ENCODE measurements at regions of chr9 and their contacts with region 1.

Region 1: GRCh38 chr9:91193658-91194391 is 167.9 kb downstream of the AUH start:
- DNase-seq: peak; percentile 92
- ATAC-seq: peak; percentile 54
- H3K4me3 Mint-ChIP-seq: peak overlapping the region; percentile 67
- H3K27ac Mint-ChIP-seq: peak overlapping the region; percentile 91
- H3K4me1 Mint-ChIP-seq: peaks cover 70% of the 10 kb centered on the region
- H3K27me3 Mint-ChIP-seq: no peaks in the 10 kb centered on the region
- CTCF ChIP-seq: no peak

Region 2: GRCh38 chr9:91101611-91102168 is 92.1 kb before region 1 on chr9:
- CTCF ChIA-PET with region 1: interaction called, 6 read pairs
- POLR2A ChIA-PET with region 1: interaction called, 3 read pairs
- intact Hi-C with region 1: loop called (anchors 1 kb)
- DNase-seq: peak; percentile 97
- ATAC-seq: peak; percentile 82
- H3K4me3 Mint-ChIP-seq: peak overlapping the region; percentile 79
- H3K27ac Mint-ChIP-seq: peak overlapping the region; percentile 95
- H3K4me1 Mint-ChIP-seq: peaks cover 58% of the 10 kb centered on the region
- H3K27me3 Mint-ChIP-seq: peaks cover 3% of the 10 kb centered on the region
- CTCF ChIP-seq: no peak

Region 3: GRCh38 chr9:91150998-91151717 is 42.7 kb before region 1 on chr9:
- CTCF ChIA-PET with region 1: interaction called, 12 read pairs
- POLR2A ChIA-PET with region 1: interaction called, 69 read pairs
- intact Hi-C with region 1: loop called (anchors 1 kb)
- DNase-seq: peak; percentile 72
- ATAC-seq: peak; percentile 68
- H3K4me3 Mint-ChIP-seq: peak overlapping the region; percentile 0
- H3K27ac Mint-ChIP-seq: peak overlapping the region; percentile 94
- H3K4me1 Mint-ChIP-seq: peaks cover 85% of the 10 kb centered on the region
- H3K27me3 Mint-ChIP-seq: no peaks in the 10 kb centered on the region
- CTCF ChIP-seq: no peak

Region 4: DNA sequence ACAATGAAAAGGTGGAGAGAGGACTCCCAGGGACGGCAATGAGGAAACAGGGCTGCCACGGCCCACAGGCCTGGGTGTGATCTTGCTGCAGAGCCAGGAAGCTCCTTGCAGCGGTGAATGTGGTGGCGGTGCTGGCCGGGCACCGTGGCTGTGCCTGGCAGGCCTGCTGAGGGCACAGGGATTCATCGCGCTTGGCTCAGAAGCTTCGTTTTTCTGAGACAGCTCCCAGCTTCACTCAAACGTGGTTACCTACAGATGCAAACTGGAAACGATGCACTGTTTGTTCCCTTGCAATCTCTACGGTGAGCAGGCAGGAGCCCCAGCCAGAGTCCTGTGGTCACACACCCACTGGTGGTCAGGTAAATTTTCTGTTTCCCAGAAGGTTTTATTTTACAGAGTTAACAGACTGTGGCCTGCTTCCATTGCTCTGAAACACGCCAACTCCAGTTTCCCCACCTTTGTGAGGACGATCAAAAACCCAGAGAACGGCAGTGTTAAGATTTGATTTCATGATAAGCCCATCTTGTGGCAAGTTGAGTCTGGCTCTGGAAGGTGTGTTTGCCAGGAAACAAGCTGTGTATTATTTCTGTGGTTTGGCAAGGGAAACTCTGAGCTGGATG is 16.1 kb before region 1 on chr9:
- CTCF ChIA-PET with region 1: interaction called, 10 read pairs
- POLR2A ChIA-PET with region 1: interaction called, 32 read pairs
- intact Hi-C with region 1: no loop called
- DNase-seq: peak; percentile 77
- ATAC-seq: peak; percentile 66
- H3K4me3 Mint-ChIP-seq: peak overlapping the region; percentile 51
- H3K27ac Mint-ChIP-seq: peak overlapping the region; percentile 95
- H3K4me1 Mint-ChIP-seq: peaks cover 58% of the 10 kb centered on the region
- H3K27me3 Mint-ChIP-seq: no peaks in the 10 kb centered on the region
- CTCF ChIP-seq: no peak

Region 5: DNA sequence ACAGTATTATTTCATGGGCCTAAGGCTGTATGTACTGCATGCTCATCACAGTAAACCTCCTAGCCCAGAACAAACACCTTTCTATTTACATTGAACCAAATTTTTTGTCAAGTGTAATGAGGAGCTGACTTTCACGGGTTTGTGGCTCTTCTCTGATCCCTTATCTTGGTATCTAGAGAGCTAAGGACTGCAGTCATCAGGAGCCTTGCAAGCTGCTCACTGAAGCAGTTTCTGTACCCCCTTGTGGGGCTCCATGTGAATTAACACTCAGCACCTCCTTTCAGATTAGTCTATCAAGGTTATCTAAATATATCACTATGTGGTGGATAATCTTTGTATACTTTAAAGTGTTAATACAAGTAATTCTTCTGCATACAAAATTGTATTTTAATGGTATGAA is 59.7 kb after region 1 on chr9:
- CTCF ChIA-PET with region 1: interaction called, 3 read pairs
- POLR2A ChIA-PET with region 1: interaction called, 4 read pairs
- intact Hi-C with region 1: loop called (anchors 10 kb)
- DNase-seq: peak; percentile 56
- ATAC-seq: peak; percentile 93
- H3K4me3 Mint-ChIP-seq: no peak overlapping the region
- H3K27ac Mint-ChIP-seq: no peak overlapping the region
- H3K4me1 Mint-ChIP-seq: peaks cover 31% of the 10 kb centered on the region
- H3K27me3 Mint-ChIP-seq: no peaks in the 10 kb centered on the region
- CTCF ChIP-seq: peak; percentile 15

Region 6: DNA sequence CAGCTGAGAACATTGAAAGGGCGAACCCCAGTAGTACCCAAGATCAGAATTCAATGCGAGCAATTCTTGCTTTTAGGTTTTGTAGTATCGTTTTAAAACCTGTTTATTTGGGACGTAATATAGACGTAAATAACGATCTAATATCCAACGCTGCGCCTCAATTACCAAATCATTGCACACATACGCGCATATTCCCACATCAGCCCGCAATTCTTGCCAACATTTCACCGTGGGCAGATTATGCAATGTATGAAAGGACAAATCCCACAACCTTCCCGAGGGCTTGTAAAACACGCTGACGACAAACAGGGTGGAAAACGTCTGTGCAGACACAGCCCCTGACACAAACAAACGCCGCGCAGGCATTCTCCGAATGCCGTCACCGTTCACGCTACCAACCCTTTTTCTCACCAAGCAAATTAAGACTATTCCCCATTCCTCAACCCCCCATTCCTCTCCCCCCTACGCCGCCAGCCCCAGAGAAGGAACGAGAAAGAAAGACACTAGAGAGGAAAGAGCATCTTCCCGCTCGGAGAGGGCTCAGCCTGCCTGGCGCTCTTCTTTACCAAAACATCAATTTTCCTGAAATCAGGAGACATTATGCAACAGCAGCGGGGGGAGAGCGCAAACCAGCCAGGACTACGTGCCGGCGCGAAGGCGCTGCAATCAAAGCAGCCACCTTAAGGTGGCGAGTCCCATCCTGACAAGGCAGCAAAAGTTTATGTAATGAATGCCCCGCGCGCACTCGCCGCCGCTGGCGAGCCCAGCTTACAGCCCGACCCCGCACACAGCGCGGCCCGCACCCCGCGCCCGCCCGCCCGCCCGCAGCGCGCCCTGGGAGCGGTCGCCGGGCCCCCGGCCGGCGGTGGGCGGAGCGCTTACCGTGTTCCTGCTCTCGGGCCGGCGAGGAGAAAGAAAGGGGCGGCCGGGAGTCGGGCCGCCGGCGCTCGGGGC is 229.2 kb after region 1 on chr9:
- CTCF ChIA-PET with region 1: interaction called, 3 read pairs
- POLR2A ChIA-PET with region 1: interaction called, 4 read pairs
- intact Hi-C with region 1: loop called (anchors 2 kb)
- DNase-seq: peak; percentile 74
- ATAC-seq: peak; percentile 34
- H3K4me3 Mint-ChIP-seq: peak overlapping the region; percentile 99
- H3K27ac Mint-ChIP-seq: peak overlapping the region; percentile 88
- H3K4me1 Mint-ChIP-seq: peaks cover 58% of the 10 kb centered on the region
- H3K27me3 Mint-ChIP-seq: peaks cover 4% of the 10 kb centered on the region
- CTCF ChIP-seq: peak; percentile 30

Region 7: DNA sequence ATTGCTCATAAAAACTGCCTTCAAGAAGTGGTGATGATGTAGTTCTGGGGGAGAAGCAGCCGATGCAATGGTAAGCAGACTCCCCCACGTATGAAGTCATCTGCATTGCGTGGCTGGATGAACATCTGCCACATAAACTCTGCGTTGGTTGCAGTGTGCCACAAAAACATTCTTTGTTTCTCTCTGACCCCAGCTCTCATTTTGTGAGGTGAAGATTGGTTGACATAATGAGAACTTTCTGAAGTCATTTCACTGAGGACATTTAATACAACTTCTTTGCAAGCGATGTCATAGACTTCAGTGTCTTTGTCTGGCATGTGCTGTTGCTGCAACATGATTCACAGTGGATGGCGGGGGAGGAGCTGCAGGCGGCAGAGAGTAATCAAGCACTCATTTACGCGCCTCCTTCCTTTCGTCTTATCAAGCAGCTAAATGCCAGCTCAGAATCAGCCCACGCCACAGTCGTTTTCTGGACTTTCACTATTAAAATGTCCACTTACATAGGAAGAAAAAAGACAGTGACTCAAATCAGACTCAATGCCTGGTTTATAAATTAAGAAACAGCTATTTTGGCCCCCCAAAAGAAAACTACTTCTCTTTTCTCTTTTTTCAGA is 321.4 kb after region 1 on chr9:
- CTCF ChIA-PET with region 1: no interaction called
- POLR2A ChIA-PET with region 1: no interaction called
- intact Hi-C with region 1: no loop called
- DNase-seq: peak; percentile 56
- ATAC-seq: peak; percentile 74
- H3K4me3 Mint-ChIP-seq: no peak overlapping the region
- H3K27ac Mint-ChIP-seq: no peak overlapping the region
- H3K4me1 Mint-ChIP-seq: peaks cover 7% of the 10 kb centered on the region
- H3K27me3 Mint-ChIP-seq: peaks cover 34% of the 10 kb centered on the region
- CTCF ChIP-seq: no peak